Ovary (tissue), 10 donors: ENCODE measurements at regions of chr1 and their contacts with region 1.

Region 1: GRCh38 chr1:32650752-32651460 is at the start of gene RBBP4:
- DNase-seq: peak; percentile 97 to 99 (median 98)
- H3K4me3 ChIP-seq: peak within 1 kb of the TSS; percentile 61
- H3K27ac ChIP-seq: peak within 1 kb of the TSS; percentile 89 to 96
- H3K4me1 ChIP-seq: peaks cover 2% of the 10 kb centered on the region
- H3K27me3 ChIP-seq: no peaks in the 10 kb centered on the region
- CTCF ChIP-seq: peak; percentile 24 to 32 (median 29)
- EP300 ChIP-seq: peak; percentile 5
- POLR2A ChIP-seq: peak; percentile 82
- total RNA-seq, gene RBBP4: 86.3 to 223 (median 191) TPM

Region 2: GRCh38 chr1:32702599-32703478 is 51.9 kb after region 1 on chr1 and contains the start of gene SYNC:
- intact Hi-C with region 1: loop called in 1 of 4 experiments (anchors 10 kb)
- DNase-seq: peak; percentile 64 to 80 (median 73)
- H3K4me3 ChIP-seq: peak within 1 kb of the TSS; percentile 39
- H3K27ac ChIP-seq: peak within 1 kb of the TSS; percentile 61 to 86
- H3K4me1 ChIP-seq: peaks cover 14% of the 10 kb centered on the region
- H3K27me3 ChIP-seq: no peaks in the 10 kb centered on the region
- CTCF ChIP-seq: no peak
- EP300 ChIP-seq: no peak
- POLR2A ChIP-seq: no peak
- total RNA-seq, gene SYNC: 3.2 to 13.5 (median 9.8) TPM